ENCODE measurements at regions of chr3 and their contacts with region 1.

Region 1: DNA sequence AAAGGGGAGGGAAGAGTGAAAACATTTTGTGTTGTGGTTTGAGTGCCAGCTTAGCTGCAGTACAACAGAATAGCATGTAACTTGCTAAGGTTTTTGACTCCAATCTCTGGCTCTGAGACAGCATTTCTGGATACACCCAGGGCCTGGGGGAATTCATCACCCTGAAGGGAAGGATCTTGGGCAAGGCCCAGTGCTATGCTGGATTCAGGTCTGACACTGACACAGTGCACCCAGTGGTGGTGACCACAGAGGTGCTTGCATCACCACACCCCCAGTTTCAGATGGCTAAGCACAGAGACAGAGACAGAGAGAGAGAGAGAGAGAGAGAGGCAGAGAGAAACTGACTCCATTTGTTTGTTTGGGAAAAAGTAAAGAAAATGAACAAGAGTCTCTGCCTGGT is 74.1 kb upstream of the KBTBD8 start:
- DNase-seq: no peak
- H3K4me3 ChIP-seq: no peak overlapping the region
- H3K27ac ChIP-seq: no peak overlapping the region
- H3K4me1 ChIP-seq: no peaks in the 10 kb centered on the region
- H3K27me3 ChIP-seq: no peaks in the 10 kb centered on the region
- CTCF ChIP-seq: no peak

Region 2: GRCh38 chr3:66836363-66837152 is 87.4 kb before region 1 on chr3:
- intact Hi-C with region 1: loop called (anchors 10 kb)
- DNase-seq: no peak
- H3K4me3 ChIP-seq: no peak overlapping the region
- H3K27ac ChIP-seq: no peak overlapping the region
- H3K4me1 ChIP-seq: no peaks in the 10 kb centered on the region
- H3K27me3 ChIP-seq: no peaks in the 10 kb centered on the region
- CTCF ChIP-seq: peak; percentile 18

Measured in colonic mucosa (tissue), 4 donors.